ENCODE measurements at regions of chr7 and their contacts with region 1.

Region 1: GRCh38 chr7:4830176-4830575 is 31.7 kb downstream of the PAPOLB start:
- DNase-seq: peak; percentile 82 to 89 (median 86)
- H3K4me3 ChIP-seq: no peak overlapping the region
- H3K27ac ChIP-seq: no peak overlapping the region
- H3K4me1 ChIP-seq: peaks cover 0 to 3% (median 0%) of the 10 kb centered on the region in 4 experiments
- H3K27me3 ChIP-seq: no peaks in the 10 kb centered on the region

Region 2: DNA sequence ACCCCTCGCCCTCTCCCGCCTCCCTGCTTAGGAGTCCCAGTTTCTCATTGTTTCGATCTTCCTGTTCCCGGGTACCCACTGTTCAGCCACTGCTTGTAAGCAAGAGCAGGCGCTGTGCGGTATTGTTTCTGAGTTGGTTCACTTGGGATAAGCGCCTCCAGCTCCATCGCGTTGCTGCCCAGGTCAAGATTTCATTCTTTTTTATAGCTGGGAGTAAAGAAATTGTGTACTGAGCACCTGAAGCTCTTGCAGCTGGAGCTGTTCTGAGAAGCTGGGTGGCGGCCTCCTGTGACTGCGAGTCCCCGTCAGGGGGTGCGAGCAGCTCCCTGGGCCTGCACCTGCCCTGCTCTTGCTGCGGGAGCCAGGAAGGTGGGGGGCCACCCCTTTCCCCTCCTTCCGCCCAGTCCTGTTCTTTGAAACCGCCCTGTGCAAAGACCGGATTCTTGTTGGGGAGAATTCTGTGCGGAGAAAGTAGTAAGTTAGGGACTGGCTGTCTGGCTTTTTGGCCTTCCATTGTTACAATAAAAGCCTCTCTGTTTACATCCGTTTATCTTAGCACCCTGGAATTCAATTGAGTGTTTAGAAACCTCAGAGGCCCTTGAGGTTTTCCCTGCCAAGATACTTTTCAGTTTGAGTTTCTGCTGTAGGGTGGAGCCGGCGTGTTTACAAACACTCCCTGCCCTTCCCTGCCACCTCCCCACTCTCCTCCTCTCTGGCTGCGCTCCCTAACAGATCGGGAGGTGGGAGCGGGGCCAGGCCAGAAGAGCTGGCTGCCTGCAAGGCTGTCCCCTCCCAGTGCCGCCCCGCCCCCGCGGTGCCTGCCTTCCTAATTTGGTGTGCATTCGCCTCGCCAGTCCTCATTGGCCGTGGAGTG is 85.5 kb before region 1 on chr7:
- CTCF ChIA-PET with region 1: no interaction called
- POLR2A ChIA-PET with region 1: no interaction called
- DNase-seq: peak; percentile 75 to 90 (median 76)
- H3K4me3 ChIP-seq: peak overlapping the region; percentile 11 to 88 (median 60)
- H3K27ac ChIP-seq: peak overlapping the region; percentile 85 to 93
- H3K4me1 ChIP-seq: peaks cover 3 to 61% (median 45%) of the 10 kb centered on the region in 4 experiments
- H3K27me3 ChIP-seq: no peaks in the 10 kb centered on the region

Region 3: GRCh38 chr7:4797858-4798705 is 32.1 kb before region 1 on chr7:
- CTCF ChIA-PET with region 1: interaction called, 29 read pairs
- POLR2A ChIA-PET with region 1: no interaction called
- DNase-seq: peak; percentile 54 to 74 (median 71)
- H3K4me3 ChIP-seq: no peak overlapping the region
- H3K27ac ChIP-seq: no peak overlapping the region
- H3K4me1 ChIP-seq: peaks cover 0 to under 1% (median under 1%) of the 10 kb centered on the region in 4 experiments
- H3K27me3 ChIP-seq: no peaks in the 10 kb centered on the region

Region 4: DNA sequence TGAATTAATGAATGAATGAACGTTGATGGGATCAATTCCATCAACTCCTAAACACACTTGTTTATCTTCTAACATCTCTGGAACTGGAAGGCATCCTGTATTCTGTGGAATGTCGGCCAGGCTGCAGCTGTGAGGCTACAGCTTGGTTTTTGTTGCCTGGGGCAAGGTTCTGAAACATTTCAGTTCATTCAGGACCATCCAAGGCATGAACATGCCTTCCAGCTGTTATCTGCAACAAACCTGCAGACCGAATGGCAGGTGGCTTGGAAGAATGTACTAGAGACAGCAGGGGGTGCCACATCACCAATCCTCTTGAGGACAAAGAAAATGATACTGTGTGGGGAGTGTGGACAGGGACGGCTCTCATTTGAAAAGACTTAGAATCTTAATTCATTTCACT is 19.2 kb after region 1 on chr7:
- CTCF ChIA-PET with region 1: interaction called, 11 read pairs
- POLR2A ChIA-PET with region 1: no interaction called
- DNase-seq: peak; percentile 27 to 66 (median 64)
- H3K4me3 ChIP-seq: no peak overlapping the region
- H3K27ac ChIP-seq: no peak overlapping the region
- H3K4me1 ChIP-seq: peaks cover 0 to 4% (median 2%) of the 10 kb centered on the region in 4 experiments
- H3K27me3 ChIP-seq: no peaks in the 10 kb centered on the region

Region 5: GRCh38 chr7:4883374-4884144 is 53.4 kb after region 1 on chr7 and contains the start of gene RADIL:
- CTCF ChIA-PET with region 1: interaction called, 42 read pairs
- POLR2A ChIA-PET with region 1: no interaction called
- DNase-seq: peak; percentile 93 to 95 (median 95)
- H3K4me3 ChIP-seq: peak within 1 kb of the TSS; percentile 18 to 66 (median 48)
- H3K27ac ChIP-seq: no peak within 1 kb of the TSS
- H3K4me1 ChIP-seq: peaks cover 0 to 17% (median 15%) of the 10 kb centered on the region in 4 experiments
- H3K27me3 ChIP-seq: peaks cover 0 to 28% (median 22%) of the 10 kb centered on the region in 5 experiments

Region 6: GRCh38 chr7:5309146-5309545 is 479.0 kb after region 1 on chr7:
- CTCF ChIA-PET with region 1: no interaction called
- POLR2A ChIA-PET with region 1: no interaction called
- DNase-seq: no peak
- H3K4me3 ChIP-seq: no peak overlapping the region
- H3K27ac ChIP-seq: no peak overlapping the region
- H3K4me1 ChIP-seq: no peaks in the 10 kb centered on the region
- H3K27me3 ChIP-seq: no peaks in the 10 kb centered on the region